ENCODE measurements at regions of chr20 and their contacts with region 1.

Region 1: DNA sequence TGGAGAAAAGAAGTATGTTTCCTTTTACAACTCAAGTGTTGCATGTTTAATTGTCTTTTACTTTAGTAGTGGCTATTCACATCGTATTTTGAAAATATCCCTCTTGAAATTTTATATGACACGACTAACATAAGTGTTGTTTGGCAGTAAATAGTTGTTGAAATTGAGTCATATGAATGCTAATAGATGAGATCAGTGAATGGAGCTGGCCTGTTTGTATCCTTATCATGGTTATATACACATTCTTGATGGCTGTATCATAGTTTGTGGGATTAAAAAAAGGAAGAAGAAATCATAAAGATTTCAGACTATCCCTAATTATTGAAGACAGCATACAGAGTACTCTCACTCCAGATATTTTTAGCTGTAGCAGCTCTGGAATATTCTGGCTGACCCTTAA is 8.2 kb upstream of the RAE1 start:
- DNase-seq: peak; percentile 10
- ATAC-seq: no peak
- H3K4me3 ChIP-seq: no peak overlapping the region
- H3K27ac ChIP-seq: no peak overlapping the region
- H3K4me1 ChIP-seq: no peaks in the 10 kb centered on the region
- H3K27me3 ChIP-seq: peaks cover 2% of the 10 kb centered on the region; the same call in 1 of the 2 replicates
- CTCF ChIP-seq: no peak
- POLR2A ChIP-seq: no peak
- RAD21 ChIP-seq: no peak

Region 2: GRCh38 chr20:57089691-57090150 is 253.1 kb before region 1 on chr20:
- CTCF ChIA-PET with region 1: interaction called, 4 read pairs
- POLR2A ChIA-PET with region 1: no interaction called
- dilution Hi-C with region 1: no loop called
- in situ Hi-C with region 1: loop called (anchors 5 kb)
- intact Hi-C with region 1: loop called (anchors 1 kb)
- DNase-seq: peak; percentile 5
- ATAC-seq: peak; percentile 85
- H3K4me3 ChIP-seq: no peak overlapping the region
- H3K27ac ChIP-seq: no peak overlapping the region
- H3K4me1 ChIP-seq: no peaks in the 10 kb centered on the region
- H3K27me3 ChIP-seq: no peaks in the 10 kb centered on the region
- CTCF ChIP-seq: peak; percentile 59
- POLR2A ChIP-seq: no peak
- RAD21 ChIP-seq: peak; percentile 56